OCI-LY7 (cell line): ENCODE measurements at regions of chr10 and their contacts with region 1.

Region 1: GRCh38 chr10:12348870-12349628 is at the start of gene CAMK1D:
- DNase-seq: peak; percentile 90
- H3K4me3 ChIP-seq: peak within 1 kb of the TSS; percentile 84
- H3K27ac ChIP-seq: peak within 1 kb of the TSS; percentile 80
- H3K4me1 ChIP-seq: peaks cover 55% of the 10 kb centered on the region
- CTCF ChIP-seq: peak; percentile 52
- total RNA-seq, gene CAMK1D: 17.8 and 19.0 TPM in 2 replicates

Region 2: GRCh38 chr10:11993834-11994468 is 355.1 kb before region 1 on chr10:
- CTCF ChIA-PET with region 1: no interaction called
- POLR2A ChIA-PET with region 1: no interaction called
- intact Hi-C with region 1: no loop called
- DNase-seq: peak; percentile 88
- H3K4me3 ChIP-seq: peak overlapping the region; percentile 29
- H3K27ac ChIP-seq: peak overlapping the region; percentile 95
- H3K4me1 ChIP-seq: peaks cover 65% of the 10 kb centered on the region
- CTCF ChIP-seq: no peak

Region 3: DNA sequence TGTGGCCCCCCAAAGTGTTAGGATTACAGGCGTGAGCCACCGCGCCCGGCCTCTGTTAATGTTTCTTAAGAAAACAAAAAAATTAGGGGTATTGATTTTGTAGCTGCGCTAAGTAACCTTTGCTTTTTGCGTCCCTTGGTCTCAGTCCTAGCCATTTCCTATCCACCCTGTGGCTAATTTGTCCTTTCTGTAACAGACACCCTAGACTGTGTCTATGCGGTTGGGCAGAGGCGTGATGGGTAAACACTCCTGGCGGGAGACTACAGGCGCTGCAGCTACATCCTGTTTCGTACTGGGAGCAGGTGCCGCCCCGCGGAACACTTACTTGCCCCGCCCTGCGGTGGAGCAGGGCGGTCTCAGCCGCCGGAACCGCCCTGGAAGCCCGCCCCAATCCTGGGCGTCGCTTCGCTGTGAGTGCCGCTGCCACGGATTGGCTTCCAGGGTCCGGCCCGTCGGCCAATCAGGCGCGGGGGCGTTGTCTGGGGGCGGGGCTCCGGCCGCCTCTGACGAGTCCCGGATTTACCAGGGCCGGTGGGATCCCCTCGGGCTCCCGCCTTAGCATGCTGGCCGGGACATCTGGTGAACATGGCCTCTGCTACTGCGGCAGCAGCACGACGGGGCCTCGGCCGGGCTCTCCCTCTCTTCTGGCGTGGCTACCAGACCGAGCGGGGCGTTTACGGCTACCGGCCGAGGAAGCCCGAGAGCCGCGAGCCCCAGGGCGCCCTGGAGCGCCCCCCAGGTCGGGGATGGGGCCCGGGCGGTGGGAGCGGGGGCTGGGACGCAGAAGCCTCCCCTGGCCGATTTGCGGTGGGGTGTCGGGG is 280.4 kb before region 1 on chr10 and contains the start of gene DHTKD1:
- CTCF ChIA-PET with region 1: no interaction called
- POLR2A ChIA-PET with region 1: interaction called, 5 read pairs
- intact Hi-C with region 1: loop called (anchors 10 kb)
- DNase-seq: peak; percentile 99
- H3K4me3 ChIP-seq: peak within 1 kb of the TSS; percentile 86
- H3K27ac ChIP-seq: peak within 1 kb of the TSS; percentile 76
- H3K4me1 ChIP-seq: peaks cover 45% of the 10 kb centered on the region
- CTCF ChIP-seq: peak; percentile 50; the same call in 1 of the 2 replicates
- total RNA-seq, gene DHTKD1: 46.5 and 53.1 TPM in 2 replicates

Region 4: GRCh38 chr10:12513775-12514673 is 165.0 kb after region 1 on chr10:
- CTCF ChIA-PET with region 1: no interaction called
- POLR2A ChIA-PET with region 1: no interaction called
- intact Hi-C with region 1: no loop called
- DNase-seq: no peak
- H3K4me3 ChIP-seq: no peak overlapping the region
- H3K27ac ChIP-seq: no peak overlapping the region
- H3K4me1 ChIP-seq: no peaks in the 10 kb centered on the region
- CTCF ChIP-seq: no peak